Sigmoid colon (tissue), 7 donors: ENCODE measurements at regions of chrX and their contacts with region 1.

Region 1: DNA sequence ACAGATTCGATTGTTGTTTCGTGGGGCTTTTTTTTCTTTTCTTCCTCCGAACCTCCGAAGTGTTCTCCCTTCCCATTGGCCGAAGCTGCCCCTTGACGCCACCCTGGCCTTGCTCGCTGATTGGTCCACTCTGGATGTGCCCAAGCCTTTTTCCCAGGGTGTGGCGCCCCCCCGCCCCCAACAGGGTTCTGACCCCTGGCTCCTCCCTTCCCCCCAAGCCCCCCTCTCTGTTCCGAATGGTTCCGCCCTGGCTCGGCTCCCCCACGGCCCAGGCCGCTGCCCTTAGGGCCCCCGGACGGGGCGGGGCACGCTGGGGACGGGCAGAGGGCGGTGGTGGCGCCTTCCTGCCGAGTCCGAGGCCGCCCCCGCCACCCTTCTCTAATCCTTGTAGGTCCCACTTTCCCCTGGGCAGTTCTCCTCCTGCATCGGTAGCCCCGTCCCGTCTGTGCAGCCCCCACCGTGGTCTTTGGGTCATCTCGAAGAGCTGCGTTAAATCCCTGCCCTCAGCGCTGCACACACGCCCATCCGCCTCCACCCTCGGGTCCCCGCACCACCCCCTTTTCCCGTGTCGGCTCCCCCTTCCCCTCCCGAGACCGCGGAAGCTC is 25.5 kb downstream of the UTP14A start:
- DNase-seq: peak; percentile 97
- H3K4me3 ChIP-seq: peak overlapping the region; percentile 39 to 58 (median 56)
- H3K27ac ChIP-seq: peak overlapping the region; percentile 85 to 88 (median 86)
- H3K4me1 ChIP-seq: no peaks in the 10 kb centered on the region
- H3K27me3 ChIP-seq: no peaks in the 10 kb centered on the region
- CTCF ChIP-seq: no peak
- EP300 ChIP-seq: no peak
- POLR2A ChIP-seq: peak in 1 of 2 donors; percentile 44

Region 2: DNA sequence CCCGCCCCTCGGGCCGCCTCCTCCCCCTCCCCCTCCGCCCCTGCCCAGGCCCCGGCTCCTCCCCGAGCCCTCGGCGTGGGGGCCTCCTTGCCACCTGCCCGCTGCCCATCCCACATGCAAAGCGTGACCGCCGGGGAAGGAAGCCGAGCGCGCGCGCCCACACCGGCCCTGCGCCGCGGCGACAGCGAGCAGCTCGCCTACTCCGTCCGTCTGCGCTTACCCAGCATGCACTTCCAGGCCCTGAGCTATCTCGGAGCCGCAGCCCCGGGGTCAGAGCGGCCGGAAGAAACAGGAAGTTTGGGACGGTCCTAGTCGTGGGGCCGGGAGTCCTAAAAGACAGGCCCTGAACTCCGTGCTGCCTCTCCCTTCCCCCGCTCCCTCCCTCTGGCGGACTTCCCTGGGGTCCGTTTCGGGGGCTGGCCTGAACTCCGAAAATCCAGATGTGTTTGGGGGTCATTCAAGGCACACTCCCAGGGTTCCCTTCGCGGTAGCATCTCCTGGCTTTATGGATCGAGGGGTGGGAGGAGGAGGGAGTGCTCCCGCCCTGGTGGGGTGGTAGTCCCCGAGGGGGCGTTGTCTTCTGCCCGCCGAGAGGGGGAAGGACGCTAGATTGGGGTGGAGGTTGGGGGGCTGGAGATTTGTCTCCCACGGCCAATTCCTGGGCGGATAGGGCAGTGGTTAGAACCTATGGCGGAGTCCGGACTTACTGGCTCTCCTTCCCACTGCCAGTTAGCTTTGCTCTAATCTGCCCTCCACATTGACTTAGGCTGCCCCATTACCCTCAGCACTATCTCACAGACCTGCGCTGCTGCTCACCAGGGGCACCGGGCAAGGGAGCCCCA is 25.9 kb after region 1 on chrX:
- intact Hi-C with region 1: loop called (anchors 2 kb)
- DNase-seq: peak; percentile 73
- H3K4me3 ChIP-seq: peak overlapping the region; percentile 21 to 51 (median 46)
- H3K27ac ChIP-seq: peak overlapping the region; percentile 58 to 65 (median 62)
- H3K4me1 ChIP-seq: peaks cover 0 to 10% (median 5%) of the 10 kb centered on the region in 4 donors
- H3K27me3 ChIP-seq: no peaks in the 10 kb centered on the region
- CTCF ChIP-seq: no peak
- EP300 ChIP-seq: no peak
- POLR2A ChIP-seq: no peak

Region 3: GRCh38 chrX:130170752-130171445 is 239.4 kb after region 1 on chrX:
- intact Hi-C with region 1: loop called (anchors 2 kb)
- DNase-seq: no peak
- H3K4me3 ChIP-seq: peak overlapping the region; percentile 13 to 50 (median 44)
- H3K27ac ChIP-seq: peak overlapping the region in 1 of 4 donors; percentile 33
- H3K4me1 ChIP-seq: peaks cover 2 to 21% (median 9%) of the 10 kb centered on the region in 4 donors
- H3K27me3 ChIP-seq: no peaks in the 10 kb centered on the region
- CTCF ChIP-seq: no peak
- EP300 ChIP-seq: no peak
- POLR2A ChIP-seq: no peak